ENCODE measurements at regions of chr2 and their contacts with region 1.

Region 1: GRCh38 chr2:39379643-39380524 is 57.2 kb downstream of the MAP4K3 start:
- DNase-seq: no peak
- H3K4me3 Mint-ChIP-seq: no peak overlapping the region
- H3K27ac Mint-ChIP-seq: no peak overlapping the region
- H3K4me1 Mint-ChIP-seq: peaks cover 19% of the 10 kb centered on the region
- H3K27me3 Mint-ChIP-seq: no peaks in the 10 kb centered on the region

Region 2: DNA sequence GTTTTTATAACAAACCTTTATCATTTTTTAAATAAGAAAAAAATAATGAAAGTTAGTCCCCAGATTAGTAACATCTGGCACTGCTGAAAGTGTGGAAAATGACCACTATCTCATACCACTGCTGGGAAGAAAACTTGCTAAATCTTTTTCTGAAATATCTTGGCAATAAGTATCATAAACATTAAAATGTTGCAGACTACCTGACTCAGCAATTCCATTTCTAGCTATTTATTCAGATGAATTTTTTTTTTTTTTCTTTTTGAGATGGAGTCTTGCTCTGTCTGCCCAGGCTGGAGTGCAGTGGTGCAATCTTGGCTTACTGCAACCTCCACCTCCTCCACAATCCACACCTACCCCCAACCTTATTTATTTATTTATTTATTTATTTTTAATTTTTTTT is 223.8 kb before region 1 on chr2:
- CTCF ChIA-PET with region 1: no interaction called
- POLR2A ChIA-PET with region 1: no interaction called
- intact Hi-C with region 1: no loop called
- DNase-seq: no peak
- H3K4me3 Mint-ChIP-seq: no peak overlapping the region
- H3K27ac Mint-ChIP-seq: no peak overlapping the region
- H3K4me1 Mint-ChIP-seq: no peaks in the 10 kb centered on the region
- H3K27me3 Mint-ChIP-seq: no peaks in the 10 kb centered on the region

Region 3: GRCh38 chr2:39408316-39409136 is 28.6 kb after region 1 on chr2:
- CTCF ChIA-PET with region 1: interaction called, 3 read pairs
- POLR2A ChIA-PET with region 1: no interaction called
- intact Hi-C with region 1: loop called (anchors 2 kb)
- DNase-seq: no peak
- H3K4me3 Mint-ChIP-seq: no peak overlapping the region
- H3K27ac Mint-ChIP-seq: no peak overlapping the region
- H3K4me1 Mint-ChIP-seq: peaks cover 69% of the 10 kb centered on the region
- H3K27me3 Mint-ChIP-seq: no peaks in the 10 kb centered on the region

Region 4: DNA sequence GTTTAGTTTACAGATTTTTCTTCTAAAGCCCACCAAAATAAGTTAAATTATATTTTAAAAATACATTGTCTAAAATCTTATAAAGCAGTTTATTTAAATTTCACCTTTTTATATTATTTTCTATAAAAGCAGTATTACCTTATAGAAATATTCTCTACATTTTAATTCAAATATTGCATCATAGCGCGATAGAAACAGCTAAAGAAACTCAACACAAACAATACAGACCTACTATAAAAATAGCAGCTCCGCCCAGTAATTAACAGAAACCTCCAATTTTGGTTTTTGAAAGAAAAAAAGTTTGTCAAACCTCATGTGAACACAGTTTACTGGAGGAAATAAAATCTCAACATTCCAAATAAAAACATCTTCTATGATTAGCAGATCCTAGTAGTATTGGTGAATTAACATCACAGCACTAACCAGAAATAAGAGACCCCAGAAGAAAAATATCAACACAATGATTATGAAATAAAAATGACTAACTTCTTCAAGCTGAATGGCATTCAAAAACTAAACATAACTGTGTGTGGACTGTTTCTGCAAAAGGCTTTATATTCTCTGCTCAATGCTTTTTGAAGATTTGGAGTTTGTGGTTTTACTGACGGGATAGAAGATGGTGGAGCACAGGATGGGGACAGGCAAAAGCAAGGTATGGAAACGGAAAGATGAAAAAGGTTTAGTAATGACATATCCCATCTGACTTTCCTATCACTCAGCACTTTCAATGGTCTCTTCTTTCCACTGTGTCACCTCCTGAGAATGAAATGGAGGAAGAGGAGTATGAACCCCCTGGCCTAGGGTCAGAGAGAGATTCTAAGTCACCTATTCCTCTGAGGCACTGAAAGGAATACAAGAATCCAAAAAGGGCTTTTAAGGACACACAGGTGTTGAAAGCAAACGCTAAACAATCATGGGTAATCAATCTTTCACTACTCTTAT is 39.7 kb after region 1 on chr2:
- CTCF ChIA-PET with region 1: no interaction called
- POLR2A ChIA-PET with region 1: no interaction called
- intact Hi-C with region 1: no loop called
- DNase-seq: no peak
- H3K4me3 Mint-ChIP-seq: no peak overlapping the region
- H3K27ac Mint-ChIP-seq: no peak overlapping the region
- H3K4me1 Mint-ChIP-seq: peaks cover 44% of the 10 kb centered on the region
- H3K27me3 Mint-ChIP-seq: no peaks in the 10 kb centered on the region

Region 5: DNA sequence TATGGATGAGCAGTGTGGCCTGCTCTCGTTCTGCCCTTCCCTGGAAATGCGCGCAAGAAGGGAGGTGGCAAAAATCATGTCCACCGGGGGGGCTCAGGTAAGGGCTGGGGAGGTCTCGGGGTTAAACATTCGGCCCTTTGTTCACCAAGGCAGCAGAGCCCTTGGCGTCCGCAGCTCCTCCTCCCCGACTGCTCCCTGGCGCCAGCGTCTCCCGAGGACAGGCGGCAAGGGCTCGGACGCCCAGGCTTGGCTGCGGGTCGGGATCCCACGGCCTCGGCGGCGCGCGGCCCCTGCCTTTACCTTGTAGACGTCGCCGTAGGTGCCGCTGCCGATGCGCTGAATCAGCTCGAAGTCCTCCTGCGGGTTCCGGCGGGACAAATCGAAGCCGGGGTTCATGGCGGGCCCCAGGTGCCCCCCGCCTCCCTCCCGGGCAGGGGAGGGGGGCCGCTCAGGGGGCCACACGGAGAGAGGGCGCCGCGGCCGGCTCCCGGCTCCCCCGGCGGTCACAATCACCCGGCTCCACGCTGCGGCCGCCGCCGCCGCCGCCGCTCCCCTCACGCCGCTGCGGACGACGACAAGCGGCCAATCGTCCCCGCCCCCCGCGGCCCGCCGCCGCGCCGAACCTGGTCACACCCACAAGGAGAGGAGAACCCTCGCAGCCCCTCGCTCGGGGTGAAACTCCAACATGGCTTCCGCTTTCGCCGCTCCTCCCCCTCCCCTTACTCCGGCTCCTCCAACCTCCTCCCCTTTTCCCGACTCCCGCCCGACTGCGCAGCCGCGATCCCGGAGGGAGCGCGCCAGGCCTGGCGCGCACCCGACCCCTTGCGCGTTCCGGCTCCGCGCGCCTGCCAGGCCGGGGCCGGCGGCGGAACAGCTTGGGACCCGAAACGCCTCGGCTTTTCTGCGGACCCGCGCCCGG is 57.0 kb after region 1 on chr2 and contains the start of gene MAP4K3:
- CTCF ChIA-PET with region 1: interaction called, 9 read pairs
- POLR2A ChIA-PET with region 1: interaction called, 3 read pairs
- intact Hi-C with region 1: loop called (anchors 2 kb)
- DNase-seq: peak; percentile 87
- H3K4me3 Mint-ChIP-seq: peak within 1 kb of the TSS; percentile 84
- H3K27ac Mint-ChIP-seq: peak within 1 kb of the TSS; percentile 82
- H3K4me1 Mint-ChIP-seq: peaks cover 65% of the 10 kb centered on the region
- H3K27me3 Mint-ChIP-seq: no peaks in the 10 kb centered on the region
- total RNA-seq, gene MAP4K3: 9.9 to 10.1 TPM

Region 6: GRCh38 chr2:39728941-39729351 is 349.1 kb after region 1 on chr2:
- CTCF ChIA-PET with region 1: interaction called, 39 read pairs
- POLR2A ChIA-PET with region 1: no interaction called
- intact Hi-C with region 1: loop called (anchors 2 kb)
- DNase-seq: peak; percentile 50
- H3K4me3 Mint-ChIP-seq: no peak overlapping the region
- H3K27ac Mint-ChIP-seq: no peak overlapping the region
- H3K4me1 Mint-ChIP-seq: peaks cover 9% of the 10 kb centered on the region
- H3K27me3 Mint-ChIP-seq: peaks cover 3% of the 10 kb centered on the region

Region 7: GRCh38 chr2:39778962-39779851 is 399.3 kb after region 1 on chr2 and contains the start of gene THUMPD2:
- CTCF ChIA-PET with region 1: interaction called, 5 read pairs
- POLR2A ChIA-PET with region 1: no interaction called
- intact Hi-C with region 1: loop called (anchors 5 kb)
- DNase-seq: peak; percentile 77
- H3K4me3 Mint-ChIP-seq: peak within 1 kb of the TSS; percentile 85
- H3K27ac Mint-ChIP-seq: peak within 1 kb of the TSS; percentile 75
- H3K4me1 Mint-ChIP-seq: peaks cover 54% of the 10 kb centered on the region
- H3K27me3 Mint-ChIP-seq: no peaks in the 10 kb centered on the region
- total RNA-seq, gene THUMPD2: 10.6 to 11.5 TPM